Ovary (tissue), 10 donors: ENCODE measurements at regions of chr2 and their contacts with region 1.

Region 1: DNA sequence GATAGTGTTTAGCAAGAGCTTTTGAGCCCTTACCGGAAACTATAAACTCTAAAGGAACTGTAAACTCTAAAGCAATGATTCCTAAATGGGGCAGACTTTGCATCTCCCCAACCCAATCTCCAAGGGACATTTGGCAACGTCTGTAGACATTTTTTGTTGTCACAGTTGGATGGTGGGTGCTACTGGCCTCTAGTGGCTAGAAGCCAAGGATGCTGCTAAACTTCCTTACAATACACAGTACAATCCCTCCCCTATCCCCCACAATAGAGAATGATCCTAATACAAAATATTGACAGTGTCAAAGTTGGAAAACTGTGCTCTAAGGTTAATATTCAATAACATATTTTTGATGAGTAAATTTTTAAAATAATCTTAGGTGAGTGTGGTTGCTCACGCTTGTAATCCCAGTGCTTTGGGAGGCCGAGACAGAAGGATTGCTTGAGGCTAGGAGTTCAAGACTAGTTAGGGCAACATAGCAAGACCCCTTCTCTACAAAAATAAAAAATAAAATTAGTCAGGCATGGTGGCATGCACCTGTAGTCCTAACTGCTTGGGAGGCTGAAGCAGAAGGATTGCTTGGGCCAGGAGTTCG is 66.7 kb downstream of the PTPN4 start:
- DNase-seq: no peak
- H3K4me3 ChIP-seq: no peak overlapping the region
- H3K27ac ChIP-seq: no peak overlapping the region
- H3K4me1 ChIP-seq: no peaks in the 10 kb centered on the region
- H3K27me3 ChIP-seq: no peaks in the 10 kb centered on the region
- CTCF ChIP-seq: no peak
- EP300 ChIP-seq: no peak
- POLR2A ChIP-seq: no peak

Region 2: DNA sequence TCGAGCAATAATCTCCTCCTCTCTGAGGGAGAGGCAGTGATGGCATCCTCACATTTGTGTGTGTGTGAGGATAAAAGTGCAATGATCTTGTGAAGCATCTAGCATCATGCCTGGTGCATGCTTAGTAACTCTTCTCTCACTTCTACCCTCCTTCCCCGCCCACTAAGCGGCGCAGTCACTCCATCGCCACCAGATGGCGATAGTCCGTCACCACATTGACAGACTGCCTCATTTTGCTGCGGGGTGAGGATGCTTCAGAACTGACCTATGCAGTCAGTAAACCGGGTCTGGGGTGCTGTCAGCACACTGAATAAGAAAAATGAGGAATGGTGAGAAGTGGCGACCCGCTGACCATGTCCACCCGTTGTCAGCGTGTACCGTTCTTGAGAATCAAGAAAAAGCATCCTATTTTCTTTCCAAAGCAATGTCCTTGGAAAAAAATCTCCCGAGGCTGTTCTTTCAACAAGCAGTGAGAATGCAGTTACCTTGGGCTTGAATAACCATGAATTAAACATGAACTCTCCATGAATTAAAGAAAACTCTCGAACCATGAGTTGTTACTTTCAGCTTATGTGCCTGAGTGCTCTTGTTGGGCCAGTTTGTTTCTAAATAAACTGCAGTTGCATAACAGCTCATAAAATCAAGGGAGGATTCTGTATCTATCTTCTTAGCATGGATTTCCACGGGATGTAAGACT is 184.8 kb before region 1 on chr2:
- intact Hi-C with region 1: loop called in 1 of 4 experiments (anchors 10 kb)
- DNase-seq: peak; percentile 63 to 80 (median 73)
- H3K4me3 ChIP-seq: no peak overlapping the region
- H3K27ac ChIP-seq: no peak overlapping the region
- H3K4me1 ChIP-seq: no peaks in the 10 kb centered on the region
- H3K27me3 ChIP-seq: no peaks in the 10 kb centered on the region
- CTCF ChIP-seq: peak; percentile 72 to 85 (median 73)
- EP300 ChIP-seq: no peak
- POLR2A ChIP-seq: no peak

Region 3: DNA sequence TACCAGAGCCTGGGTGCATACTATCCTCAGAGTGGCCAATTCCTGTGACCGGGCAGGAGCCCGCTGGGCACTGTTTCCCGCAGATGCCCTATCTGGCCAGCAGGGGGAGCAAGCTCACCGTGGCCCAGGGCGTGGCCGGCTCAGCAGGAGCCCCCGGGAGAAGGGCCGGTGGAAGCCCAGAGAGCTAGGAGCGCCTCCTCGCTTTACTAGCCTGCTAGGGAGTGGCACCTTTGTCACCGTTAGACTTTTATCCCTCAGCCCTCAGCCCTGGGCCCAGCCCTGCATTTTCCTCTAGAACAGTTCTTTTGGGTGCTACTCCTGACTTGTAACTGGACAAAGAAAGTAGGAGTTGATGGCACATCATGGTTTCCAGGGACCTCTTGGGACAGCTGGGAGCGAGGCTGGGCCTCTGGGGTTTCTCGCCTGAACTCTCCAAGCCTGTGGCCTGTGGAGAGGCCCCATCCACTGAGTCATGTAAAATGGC is 123.5 kb before region 1 on chr2:
- intact Hi-C with region 1: loop called in 1 of 4 experiments (anchors 5 kb)
- DNase-seq: peak; percentile 44 to 78 (median 69)
- H3K4me3 ChIP-seq: no peak overlapping the region
- H3K27ac ChIP-seq: no peak overlapping the region
- H3K4me1 ChIP-seq: no peaks in the 10 kb centered on the region
- H3K27me3 ChIP-seq: no peaks in the 10 kb centered on the region
- CTCF ChIP-seq: peak; percentile 74 to 86 (median 79)
- EP300 ChIP-seq: no peak
- POLR2A ChIP-seq: no peak

Region 4: GRCh38 chr2:119771331-119771730 is 55.1 kb before region 1 on chr2:
- intact Hi-C with region 1: loop called in 1 of 4 experiments (anchors 10 kb)
- DNase-seq: no peak
- H3K4me3 ChIP-seq: no peak overlapping the region
- H3K27ac ChIP-seq: no peak overlapping the region
- H3K4me1 ChIP-seq: no peaks in the 10 kb centered on the region
- H3K27me3 ChIP-seq: no peaks in the 10 kb centered on the region
- CTCF ChIP-seq: no peak
- EP300 ChIP-seq: no peak
- POLR2A ChIP-seq: no peak

Region 5: DNA sequence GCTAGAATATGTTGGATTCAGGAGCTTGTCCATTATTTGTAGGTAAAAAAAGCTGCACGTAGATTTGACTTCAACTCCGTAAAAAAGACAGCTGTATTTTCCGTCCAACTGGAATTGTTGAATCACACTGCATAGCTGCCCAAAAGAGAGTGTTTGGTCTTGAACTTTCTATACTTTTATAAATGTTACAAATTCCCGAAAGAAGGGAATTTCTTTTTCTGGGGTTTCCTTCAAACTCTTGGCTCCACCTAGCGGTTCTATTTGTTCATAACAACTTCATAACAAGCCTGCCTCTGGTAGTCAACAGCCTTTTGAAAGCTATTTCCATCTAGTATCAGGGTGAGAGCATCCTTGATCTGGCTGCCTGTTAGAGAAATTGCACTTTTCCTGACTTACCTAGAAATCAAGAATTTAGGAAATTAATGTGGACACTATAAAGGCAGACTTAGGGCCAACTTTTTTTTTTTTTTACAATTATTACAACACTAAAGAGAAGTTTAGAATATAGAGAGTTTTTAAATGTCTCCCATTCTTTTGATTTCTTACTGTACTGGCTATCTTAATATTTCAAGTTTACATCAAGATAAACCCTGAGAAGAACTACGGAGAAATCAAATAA is 348.6 kb after region 1 on chr2:
- intact Hi-C with region 1: loop called in 1 of 4 experiments (anchors 10 kb)
- DNase-seq: peak in 1 of 5 donors; percentile 30
- H3K4me3 ChIP-seq: no peak overlapping the region
- H3K27ac ChIP-seq: peak overlapping the region in 1 of 2 donors; percentile 47
- H3K4me1 ChIP-seq: no peaks in the 10 kb centered on the region
- H3K27me3 ChIP-seq: no peaks in the 10 kb centered on the region
- CTCF ChIP-seq: peak; percentile 18 to 66 (median 64)
- EP300 ChIP-seq: no peak
- POLR2A ChIP-seq: no peak